ENCODE measurements at regions of chr15 and their contacts with region 1.

Region 1: DNA sequence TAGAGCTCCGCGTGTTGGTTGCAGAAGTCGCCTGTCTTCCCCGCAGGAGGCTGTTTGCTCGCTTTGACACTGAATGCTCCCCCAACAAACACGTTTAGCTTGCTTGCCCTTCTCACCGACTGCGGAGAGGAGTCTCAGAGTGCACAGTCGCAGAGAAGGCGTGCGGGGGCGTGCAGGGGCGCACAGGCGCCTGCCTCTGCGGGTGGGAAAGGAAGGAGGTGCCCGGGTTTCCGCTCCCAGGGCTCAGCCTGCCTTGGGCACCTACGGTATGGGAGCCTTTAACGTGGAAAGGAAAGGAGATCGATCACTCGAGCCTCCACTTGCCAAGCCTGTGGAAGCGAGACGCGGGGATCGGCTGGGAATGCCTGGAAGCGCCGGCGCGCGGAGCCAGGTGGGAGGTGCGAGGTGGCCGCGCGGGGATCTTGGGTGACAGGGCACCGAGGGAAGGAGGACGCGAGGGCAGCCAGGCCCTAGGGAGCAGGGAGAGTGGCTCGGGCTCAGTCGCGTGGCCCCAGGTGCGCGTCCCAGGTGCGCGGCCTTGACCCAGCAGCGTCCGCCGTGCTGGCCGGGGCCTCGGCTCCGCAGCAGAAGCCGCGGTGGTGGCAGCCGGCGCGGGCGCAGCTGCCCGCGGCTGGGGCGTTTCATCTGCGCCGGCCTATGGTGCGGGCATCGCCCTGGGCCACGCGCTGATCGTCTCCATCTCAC is at the start of gene FAN1:
- DNase-seq: peak; percentile 93 to 96 (median 94)
- H3K4me3 ChIP-seq: peak within 1 kb of the TSS; percentile 71 to 91 (median 86)
- H3K27ac ChIP-seq: peak within 1 kb of the TSS; percentile 72 to 76
- H3K4me1 ChIP-seq: peaks cover 2 to 18% (median 11%) of the 10 kb centered on the region in 3 donors
- H3K27me3 ChIP-seq: no peaks in the 10 kb centered on the region
- CTCF ChIP-seq: no peak
- total RNA-seq, gene FAN1: 23.7 TPM

Region 2: DNA sequence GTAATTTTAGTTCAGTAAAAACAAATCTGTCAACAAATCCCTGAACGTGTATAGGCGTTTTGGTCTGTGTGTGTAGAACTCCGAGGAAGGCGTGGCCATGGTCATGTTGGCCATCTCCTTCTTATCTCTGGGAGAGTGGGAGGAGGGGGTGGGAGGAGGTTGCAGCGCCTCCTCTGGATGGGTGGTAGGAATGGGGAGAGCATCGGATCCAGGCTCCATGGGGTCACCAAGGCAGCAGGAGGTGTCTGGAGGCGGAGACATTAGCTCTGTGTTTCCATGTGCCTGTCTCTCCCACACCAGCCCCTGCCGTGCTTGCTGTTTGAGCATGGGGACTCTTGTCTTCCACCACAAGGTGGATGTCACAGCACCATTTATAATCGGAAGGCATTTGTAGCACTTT is 232.4 kb after region 1 on chr15:
- intact Hi-C with region 1: loop called (anchors 10 kb)
- DNase-seq: no peak
- H3K4me3 ChIP-seq: no peak overlapping the region
- H3K27ac ChIP-seq: no peak overlapping the region
- H3K4me1 ChIP-seq: no peaks in the 10 kb centered on the region
- H3K27me3 ChIP-seq: no peaks in the 10 kb centered on the region
- CTCF ChIP-seq: no peak